ENCODE measurements at regions of chr9 and their contacts with region 1.

Region 1: DNA sequence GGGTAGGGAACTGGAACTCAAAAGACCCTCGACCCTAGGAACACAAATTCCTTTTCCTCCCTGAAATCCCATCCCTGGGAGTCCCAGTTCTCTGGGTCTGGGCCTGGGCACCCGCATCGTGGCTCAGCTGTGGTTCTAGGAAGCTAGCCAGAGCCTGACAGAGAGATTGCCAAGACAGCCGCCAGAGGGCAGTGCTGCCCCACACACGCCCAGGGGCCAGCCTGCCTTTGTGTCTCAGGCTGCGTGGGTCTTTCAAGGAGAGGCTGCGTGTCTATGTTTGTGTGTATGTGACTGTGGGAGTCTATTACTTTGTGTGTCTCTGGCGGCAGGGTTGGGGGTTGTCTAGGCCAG is 32.0 kb upstream of the TTLL11 start:
- DNase-seq: peak; percentile 71 to 87 (median 86)
- ATAC-seq: peak; percentile 86
- H3K4me3 ChIP-seq: no peak overlapping the region
- H3K4me1 ChIP-seq: no peaks in the 10 kb centered on the region
- CTCF ChIP-seq: peak; percentile 90

Region 2: DNA sequence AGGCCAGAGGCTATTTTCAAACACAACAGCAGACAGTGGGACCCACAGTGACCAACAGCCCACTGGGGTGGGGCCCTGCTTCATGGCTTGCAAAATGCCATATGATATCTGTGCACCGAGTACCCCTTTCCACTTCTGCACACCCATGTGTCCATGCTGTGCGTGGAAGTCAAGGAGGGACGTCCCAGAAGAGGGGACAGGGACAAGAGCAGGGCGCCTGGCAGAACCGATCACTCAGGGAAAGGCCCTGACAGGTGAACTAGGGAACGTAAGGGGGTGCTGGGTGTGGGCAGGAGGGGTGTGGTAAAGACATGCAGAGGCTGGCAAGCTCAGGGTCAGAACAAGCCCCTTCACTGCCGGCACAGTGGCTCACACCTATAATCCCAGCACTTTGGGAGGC is 24.4 kb before region 1 on chr9:
- intact Hi-C with region 1: loop called in 1 of 2 experiments (anchors 2 kb)
- DNase-seq: no peak
- ATAC-seq: no peak
- H3K4me3 ChIP-seq: no peak overlapping the region
- H3K4me1 ChIP-seq: peaks cover 4% of the 10 kb centered on the region
- CTCF ChIP-seq: no peak

Region 3: DNA sequence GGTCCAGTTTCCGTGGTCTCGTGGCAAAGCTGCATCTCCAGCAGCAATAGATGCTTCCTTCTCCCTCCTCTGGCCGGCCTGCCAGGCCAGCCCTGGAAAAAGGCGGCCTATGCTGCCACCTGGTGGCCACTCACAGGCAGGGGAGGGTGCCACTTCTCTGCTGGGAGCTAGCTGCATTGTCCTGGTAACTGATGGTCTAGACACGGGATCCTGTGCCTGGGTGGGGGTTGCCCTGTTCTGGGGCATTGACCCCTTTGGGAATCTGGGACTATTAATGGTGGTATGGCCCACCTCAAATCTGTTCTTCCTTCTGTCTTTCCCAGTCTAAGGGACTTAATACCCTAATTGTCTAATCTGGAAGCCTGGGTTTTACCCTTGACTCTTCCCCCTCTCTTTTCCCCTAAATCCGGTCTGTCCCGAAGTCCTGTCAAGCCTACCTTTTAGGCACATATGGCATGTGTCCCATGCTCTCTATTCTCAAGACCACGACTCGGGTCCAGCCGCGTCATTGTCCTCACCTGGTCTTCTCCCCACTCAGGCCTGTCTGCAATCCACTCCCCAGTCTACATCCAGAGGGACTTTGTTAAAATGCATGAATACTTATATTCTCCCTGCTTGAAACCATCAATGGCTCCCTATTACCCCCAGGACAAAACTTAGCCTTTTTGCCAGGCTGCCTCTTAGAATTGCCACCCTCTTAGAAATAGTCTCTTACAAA is 225.7 kb after region 1 on chr9:
- intact Hi-C with region 1: loop called (anchors 1 to 2 kb)
- DNase-seq: peak; percentile 79 to 91 (median 84)
- ATAC-seq: peak; percentile 82
- H3K4me3 ChIP-seq: no peak overlapping the region
- H3K4me1 ChIP-seq: peaks cover 14% of the 10 kb centered on the region
- CTCF ChIP-seq: peak; percentile 92

Region 4: DNA sequence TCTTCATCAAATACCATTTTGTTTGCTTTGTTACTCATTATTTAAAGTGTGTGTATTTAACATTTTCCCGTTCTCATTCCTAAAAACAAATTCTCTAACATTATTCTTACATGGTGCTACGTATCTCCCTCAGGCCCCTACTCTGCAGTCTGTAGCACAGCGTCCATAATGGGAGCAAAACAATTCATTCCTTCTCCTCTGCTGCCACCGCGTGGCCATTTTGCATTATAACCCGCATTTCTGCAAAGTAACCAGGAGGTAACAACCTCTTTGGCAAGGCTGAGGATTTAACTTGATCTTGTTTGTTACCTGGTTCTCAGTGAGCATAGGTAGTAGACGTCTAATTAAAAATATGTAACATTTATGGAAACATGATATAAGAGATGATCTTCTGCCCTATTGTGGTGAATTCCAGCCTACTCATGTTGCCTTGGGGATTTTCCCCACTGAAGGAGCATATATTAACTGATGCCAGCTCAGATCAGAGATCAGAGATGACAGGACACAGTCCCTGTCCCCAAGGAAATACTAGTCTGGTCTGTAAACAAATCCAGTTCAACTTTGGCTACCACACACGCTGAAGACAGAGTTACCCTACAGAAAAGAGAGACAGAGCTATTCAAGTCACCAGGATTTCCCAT is 685.3 kb after region 1 on chr9:
- intact Hi-C with region 1: loop called in 1 of 2 experiments (anchors 10 kb)
- DNase-seq: peak in 2 of 3 donors; percentile 70 to 75
- ATAC-seq: peak; percentile 96
- H3K4me3 ChIP-seq: no peak overlapping the region
- H3K4me1 ChIP-seq: peaks cover 6% of the 10 kb centered on the region
- CTCF ChIP-seq: peak; percentile 63

Measured in mucosa of descending colon (tissue), 3 donors.